Esophagus muscularis mucosa (tissue), 4 donors: ENCODE measurements at regions of chr7 and their contacts with region 1.

Region 1: DNA sequence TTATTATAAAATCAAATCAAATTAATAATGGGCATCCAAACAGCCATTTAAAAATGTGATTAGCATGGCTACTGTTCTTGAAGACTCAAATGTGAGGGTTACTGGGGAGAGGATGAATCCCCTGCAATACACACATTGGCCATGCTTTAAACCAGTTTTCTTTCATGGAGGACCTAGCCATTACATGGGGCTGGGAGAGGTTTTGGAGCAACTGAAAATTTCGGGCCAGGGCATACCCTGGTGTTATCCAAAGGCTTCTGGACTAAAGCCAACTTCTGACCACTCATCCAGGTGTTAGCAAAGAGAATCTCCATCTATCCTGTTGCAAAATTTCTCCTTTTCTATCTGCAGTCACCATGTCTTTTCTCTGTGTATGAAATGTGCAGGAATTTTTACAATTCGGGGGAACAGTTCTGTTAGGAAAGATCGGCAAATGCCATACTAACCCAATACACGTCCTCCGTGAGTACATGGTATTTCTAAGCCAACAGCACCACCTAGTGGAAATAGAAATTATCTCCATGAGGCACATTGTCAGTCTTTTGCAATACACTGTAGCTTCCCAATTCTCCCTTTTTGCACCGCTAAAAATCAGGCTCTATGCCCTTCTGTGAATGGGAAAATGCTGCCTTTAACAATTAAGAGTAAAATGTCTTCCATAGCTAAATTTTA is 47.0 kb upstream of the ZNF107 start:
- DNase-seq: no peak
- H3K4me3 ChIP-seq: no peak overlapping the region
- H3K27ac ChIP-seq: no peak overlapping the region
- H3K4me1 ChIP-seq: no peaks in the 10 kb centered on the region
- H3K27me3 ChIP-seq: peaks cover 0 to 7% (median 0%) of the 10 kb centered on the region in 4 donors
- CTCF ChIP-seq: peak; percentile 69 to 76 (median 71)
- EP300 ChIP-seq: no peak
- POLR2A ChIP-seq: no peak

Region 2: GRCh38 chr7:64183126-64183742 is 435.7 kb before region 1 on chr7:
- intact Hi-C with region 1: loop called (anchors 1 kb)
- DNase-seq: no peak
- H3K4me3 ChIP-seq: no peak overlapping the region
- H3K27ac ChIP-seq: no peak overlapping the region
- H3K4me1 ChIP-seq: peaks cover 0 to 21% (median 16%) of the 10 kb centered on the region in 4 donors
- H3K27me3 ChIP-seq: peaks cover 0 to 42% (median 18%) of the 10 kb centered on the region in 4 donors
- CTCF ChIP-seq: peak; percentile 77 to 100 (median 94)
- EP300 ChIP-seq: no peak
- POLR2A ChIP-seq: no peak

Region 3: DNA sequence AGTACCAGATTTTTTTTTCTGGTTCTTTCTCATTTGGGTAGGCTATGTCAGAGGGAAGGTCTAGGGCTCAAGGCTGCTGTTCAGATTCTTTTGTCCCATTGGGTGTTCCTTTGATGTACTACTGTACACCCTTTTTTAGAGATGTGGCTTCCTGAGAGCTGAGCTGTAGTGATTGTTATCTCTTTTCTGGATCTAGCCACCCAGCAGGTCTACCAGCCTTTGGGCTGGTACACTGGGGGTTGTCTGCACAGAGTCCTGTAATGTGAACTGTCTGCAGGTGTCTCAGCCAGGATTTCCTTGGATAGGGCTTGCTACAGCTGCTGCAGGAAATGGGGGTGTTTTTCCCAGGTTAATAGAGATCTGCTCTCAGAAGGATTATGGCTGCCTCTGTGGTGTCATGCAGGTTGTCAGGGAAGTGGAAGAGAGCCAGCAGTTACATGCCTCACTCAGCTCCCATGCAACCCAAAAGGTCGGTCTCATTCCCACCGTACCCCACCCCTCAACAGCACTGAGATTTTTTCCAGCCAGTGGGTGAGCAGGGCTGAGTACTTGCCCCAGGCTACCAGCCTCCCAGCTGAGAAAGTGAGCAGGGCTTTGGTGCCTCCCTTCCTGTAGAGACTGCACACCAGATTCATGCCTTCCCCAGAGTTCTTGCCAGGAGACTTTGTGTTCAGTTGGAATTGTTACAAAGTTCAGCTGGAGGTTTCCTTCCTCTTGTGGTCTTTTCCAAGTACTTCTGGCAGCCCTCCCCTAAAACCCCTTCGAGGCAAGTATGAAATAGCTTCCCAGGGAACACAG is 110.3 kb after region 1 on chr7:
- intact Hi-C with region 1: no loop called
- DNase-seq: no peak
- H3K4me3 ChIP-seq: no peak overlapping the region
- H3K27ac ChIP-seq: no peak overlapping the region
- H3K4me1 ChIP-seq: no peaks in the 10 kb centered on the region
- H3K27me3 ChIP-seq: no peaks in the 10 kb centered on the region
- CTCF ChIP-seq: no peak
- EP300 ChIP-seq: no peak
- POLR2A ChIP-seq: no peak

Region 4: GRCh38 chr7:64787295-64787694 is 168.4 kb after region 1 on chr7:
- intact Hi-C with region 1: no loop called
- DNase-seq: no peak
- H3K4me3 ChIP-seq: no peak overlapping the region
- H3K27ac ChIP-seq: no peak overlapping the region
- H3K4me1 ChIP-seq: no peaks in the 10 kb centered on the region
- H3K27me3 ChIP-seq: no peaks in the 10 kb centered on the region
- CTCF ChIP-seq: no peak
- EP300 ChIP-seq: no peak
- POLR2A ChIP-seq: no peak

Region 5: DNA sequence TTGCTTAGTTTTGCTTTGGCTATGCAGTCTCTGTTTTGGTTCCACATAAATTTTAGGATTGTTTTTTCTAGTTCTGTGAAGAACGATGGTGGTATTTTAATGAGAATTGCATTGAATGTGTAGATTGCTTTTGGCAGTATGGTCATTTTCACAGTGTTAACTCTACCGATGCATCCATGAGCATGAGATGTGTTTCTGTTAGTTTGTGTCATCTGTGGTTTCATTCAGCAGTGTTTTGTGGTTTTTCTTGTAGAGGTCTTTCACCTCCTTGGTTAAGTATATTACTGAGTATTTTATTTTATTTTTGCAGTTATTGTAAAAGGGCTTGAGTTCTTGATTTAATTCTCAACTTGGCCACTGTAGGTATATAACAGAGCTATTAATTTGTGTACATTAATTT is 676.5 kb after region 1 on chr7:
- intact Hi-C with region 1: no loop called
- DNase-seq: no peak
- H3K4me3 ChIP-seq: no peak overlapping the region
- H3K27ac ChIP-seq: no peak overlapping the region
- H3K4me1 ChIP-seq: no peaks in the 10 kb centered on the region
- H3K27me3 ChIP-seq: peaks cover 0 to 13% (median 0%) of the 10 kb centered on the region in 4 donors
- CTCF ChIP-seq: no peak
- EP300 ChIP-seq: no peak
- POLR2A ChIP-seq: no peak